CD4-positive, alpha-beta memory T cell (primary cell): ENCODE measurements at regions of chr18 and their contacts with region 1.

Region 1: DNA sequence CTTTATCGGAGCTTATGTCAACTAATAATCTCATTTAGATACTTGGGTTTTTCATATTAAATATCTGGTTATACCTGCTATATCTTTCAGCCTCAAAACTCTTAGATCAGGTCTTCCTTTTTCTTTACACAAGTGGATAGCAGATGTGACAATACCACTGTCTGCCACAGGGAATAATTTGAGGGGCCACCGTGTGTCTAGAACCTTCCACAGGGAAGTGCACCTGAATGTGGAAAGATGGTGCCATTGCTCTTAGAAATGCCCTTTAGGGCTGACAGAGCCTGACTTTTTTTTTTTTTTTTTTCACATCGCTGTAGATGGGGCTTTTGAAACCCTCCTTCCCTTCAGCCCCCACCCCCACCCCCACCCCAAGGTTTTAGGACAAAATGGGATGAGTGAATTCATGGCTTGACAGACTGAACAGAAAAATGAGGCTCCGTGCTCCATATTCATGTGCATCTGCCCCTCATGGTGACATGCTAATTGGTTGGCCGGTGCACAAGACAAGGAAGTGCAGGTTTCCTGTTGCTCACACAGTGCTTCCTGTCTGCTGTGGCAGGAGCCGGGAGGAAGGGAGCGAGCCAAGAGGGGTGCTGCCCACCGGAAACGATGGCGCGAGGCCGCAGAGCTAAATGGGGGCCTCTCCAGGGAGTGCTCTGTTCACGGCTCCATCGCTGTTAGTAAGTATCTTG is 246.0 kb downstream of the LDLRAD4 start:
- DNase-seq: peak; percentile 56 to 83 (median 65)
- H3K4me3 ChIP-seq: peak overlapping the region; percentile 41 to 67
- H3K4me3 Mint-ChIP-seq: peak overlapping the region; percentile 86 to 96 (median 94)
- H3K27ac ChIP-seq: peak overlapping the region; percentile 47
- H3K27ac Mint-ChIP-seq: peak overlapping the region; percentile 88 to 97 (median 93)
- H3K4me1 ChIP-seq: peaks cover 60% of the 10 kb centered on the region
- H3K4me1 Mint-ChIP-seq: peaks cover 52 to 80% (median 63%) of the 10 kb centered on the region in 4 donors
- H3K27me3 ChIP-seq: no peaks in the 10 kb centered on the region
- H3K27me3 Mint-ChIP-seq: no peaks in the 10 kb centered on the region

Region 2: DNA sequence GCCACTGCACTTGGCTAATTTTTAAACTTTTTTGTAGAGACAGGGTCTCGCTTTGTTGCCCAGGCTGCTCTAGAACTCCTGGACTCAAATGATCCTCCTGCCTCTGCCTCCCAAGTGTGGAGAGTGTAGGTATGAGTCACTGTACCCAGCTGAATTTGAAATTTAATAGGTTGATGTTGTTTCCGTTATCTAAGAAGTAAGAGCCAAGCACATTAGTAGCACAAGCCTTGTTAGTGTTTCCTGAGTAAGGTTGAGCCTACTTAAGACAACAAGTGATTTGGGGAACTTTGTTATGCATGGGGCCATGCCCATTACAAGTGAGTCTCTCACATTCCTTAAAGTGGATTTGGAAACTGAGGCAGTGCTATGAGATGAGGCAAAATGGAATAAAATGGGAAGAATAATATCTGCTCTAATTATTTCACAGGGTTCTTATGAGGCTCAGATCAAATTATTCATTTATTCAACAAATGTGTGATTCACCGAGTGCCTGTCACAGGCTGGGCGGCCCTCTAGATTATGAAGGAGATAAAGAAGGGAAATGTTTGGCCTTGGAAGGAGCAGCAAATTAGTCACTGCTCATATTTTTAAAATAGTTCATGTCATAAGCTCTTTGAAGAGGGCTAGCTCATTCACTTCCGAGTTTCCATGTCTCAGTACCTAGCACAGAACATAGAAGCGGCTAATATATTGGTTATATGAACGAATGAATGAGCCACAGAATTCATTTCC is 28.8 kb before region 1 on chr18:
- CTCF ChIA-PET with region 1: interaction called, 4 read pairs
- POLR2A ChIA-PET with region 1: interaction called, 10 read pairs
- intact Hi-C with region 1: loop called (anchors 2 kb)
- DNase-seq: peak in 2 of 5 donors; percentile 15 to 53
- H3K4me3 ChIP-seq: no peak overlapping the region
- H3K4me3 Mint-ChIP-seq: peak overlapping the region in 5 of 8 donors; percentile 30 to 89 (median 67)
- H3K27ac ChIP-seq: no peak overlapping the region
- H3K27ac Mint-ChIP-seq: peak overlapping the region; percentile 79 to 97 (median 95)
- H3K4me1 ChIP-seq: peaks cover 50% of the 10 kb centered on the region
- H3K4me1 Mint-ChIP-seq: peaks cover 36 to 58% (median 50%) of the 10 kb centered on the region in 4 donors
- H3K27me3 ChIP-seq: no peaks in the 10 kb centered on the region
- H3K27me3 Mint-ChIP-seq: no peaks in the 10 kb centered on the region